ENCODE measurements at regions of chr4 and their contacts with region 1.

Region 1: DNA sequence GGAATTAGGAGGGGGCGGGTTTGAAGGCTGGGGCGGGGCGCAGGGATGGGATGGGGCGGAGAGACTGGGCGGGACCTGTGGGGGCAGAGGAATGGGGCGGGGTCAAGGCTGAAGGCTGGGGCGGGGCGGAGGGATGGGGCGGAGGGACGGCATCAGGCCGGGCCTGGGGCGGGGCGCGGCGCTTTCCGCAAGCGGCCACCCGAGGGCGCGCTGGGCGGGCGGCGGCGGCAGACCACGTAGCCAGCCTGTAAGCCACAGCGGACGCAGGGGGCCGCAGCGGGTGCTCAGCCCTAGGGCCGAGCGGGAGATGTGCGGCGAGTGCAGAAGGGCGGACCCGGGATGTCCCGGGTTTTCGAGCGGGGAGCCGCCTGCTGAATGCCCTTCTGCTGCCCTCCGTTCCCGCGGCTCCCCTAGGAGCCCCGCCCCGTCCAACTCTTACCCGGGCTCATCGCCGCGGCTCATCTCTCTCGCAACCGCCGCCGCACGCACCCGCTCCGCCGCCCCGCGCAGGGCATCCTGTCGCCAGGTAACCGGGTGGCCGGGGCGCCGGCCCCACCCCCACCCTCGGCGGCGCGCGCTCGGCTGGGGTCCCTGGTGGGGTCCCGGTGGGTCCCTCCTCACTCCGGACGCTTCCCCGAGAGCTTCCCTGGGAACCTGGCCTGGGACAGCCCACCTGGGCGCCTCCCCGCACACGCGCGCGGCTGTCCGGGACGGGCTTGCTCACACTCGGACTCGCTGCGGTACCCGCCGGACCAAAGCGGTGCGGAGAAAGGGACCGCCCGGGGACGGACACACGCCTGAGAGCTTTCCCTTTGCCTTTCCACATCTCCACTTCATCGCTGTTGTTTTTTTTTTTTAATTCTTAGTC is at the start of gene CCDC110:
- DNase-seq: peak; percentile 98
- total RNA-seq, gene CCDC110: 3.5 to 6.6 TPM

Region 2: DNA sequence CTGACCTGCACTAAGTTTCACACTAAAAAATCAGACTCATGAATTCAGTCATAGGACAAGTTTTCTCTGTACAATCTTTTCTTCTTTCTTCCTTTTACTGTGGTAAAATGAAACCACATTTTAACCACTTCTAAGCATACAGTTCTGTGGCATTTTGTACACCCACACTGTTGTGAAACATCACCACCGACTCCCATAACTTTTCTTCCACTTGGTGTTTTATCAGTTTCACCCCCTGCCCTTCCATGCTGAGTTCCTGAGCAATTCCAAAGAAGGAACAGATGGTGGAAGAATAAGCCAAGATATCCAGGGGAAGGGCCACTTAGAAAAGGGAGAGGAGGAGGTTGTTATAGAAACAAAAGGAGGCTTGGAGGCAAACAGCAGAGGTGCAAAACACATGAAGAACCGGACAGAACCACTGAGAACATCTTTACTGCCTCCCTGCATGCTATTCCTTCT is 305.8 kb before region 1 on chr4:
- intact Hi-C with region 1: no loop called
- DNase-seq: no peak

Region 3: DNA sequence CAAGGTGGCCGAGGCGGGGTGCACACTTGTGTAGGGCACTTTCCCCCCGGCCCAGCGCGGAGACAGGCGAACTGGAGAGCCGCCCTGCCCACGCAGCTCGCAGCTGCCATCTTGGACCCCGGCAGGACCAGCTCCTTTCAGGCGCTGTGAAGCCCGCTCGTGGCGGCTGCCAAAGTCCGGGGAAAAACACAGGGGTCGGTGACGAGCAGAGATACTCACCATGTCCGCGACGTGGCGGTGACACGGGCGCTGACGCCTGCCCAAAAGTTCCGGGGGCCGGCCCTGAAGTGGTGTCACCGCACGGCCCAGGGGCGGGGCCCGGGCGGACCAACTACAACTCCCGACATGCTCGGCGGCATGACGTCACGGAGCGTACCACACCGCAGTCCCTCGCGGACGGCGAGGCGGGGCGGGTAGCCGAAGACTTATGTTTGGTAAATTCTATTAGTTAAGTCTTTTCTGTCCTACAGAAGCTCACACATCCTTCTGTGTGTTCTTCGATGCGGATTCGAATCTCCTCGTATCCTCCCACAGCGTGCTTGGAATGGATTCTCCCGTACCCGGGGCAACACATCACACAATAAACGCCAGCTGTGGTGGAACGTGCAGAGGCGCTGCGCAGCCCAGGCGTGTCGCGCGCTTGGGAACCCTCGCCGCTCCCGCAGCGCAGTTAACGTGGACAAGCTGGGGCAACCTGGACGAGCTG is 45.7 kb before region 1 on chr4 and contains the start of gene UFSP2:
- intact Hi-C with region 1: no loop called
- DNase-seq: peak; percentile 96
- total RNA-seq, gene UFSP2: 40.3 to 51.8 TPM

Region 4: GRCh38 chr4:185504098-185505047 is 32.9 kb after region 1 on chr4:
- intact Hi-C with region 1: loop called in 1 of 2 experiments (anchors 5 kb)
- DNase-seq: peak; percentile 90

Region 5: GRCh38 chr4:185597532-185598188 is 126.2 kb after region 1 on chr4:
- intact Hi-C with region 1: loop called (anchors 5 kb)
- DNase-seq: peak; percentile 92